Prostate gland (tissue), 2 donors: ENCODE measurements at regions of chr10 and their contacts with region 1.

Region 1: GRCh38 chr10:21495752-21496342 is 29.6 kb downstream of the SKIDA1 start:
- DNase-seq: peak; percentile 73
- H3K4me3 ChIP-seq: peak overlapping the region; percentile 64 to 65
- H3K27ac ChIP-seq: peak overlapping the region; percentile 48 to 52
- H3K4me1 ChIP-seq: no peaks in the 10 kb centered on the region
- H3K27me3 ChIP-seq: no peaks in the 10 kb centered on the region
- CTCF ChIP-seq: peak; percentile 96 to 98 (median 98)
- POLR2A ChIP-seq: no peak

Region 2: GRCh38 chr10:21278491-21279239 is 217.2 kb before region 1 on chr10:
- intact Hi-C with region 1: loop called (anchors 5 kb)
- DNase-seq: peak; percentile 92
- H3K4me3 ChIP-seq: no peak overlapping the region
- H3K27ac ChIP-seq: no peak overlapping the region
- H3K4me1 ChIP-seq: no peaks in the 10 kb centered on the region
- H3K27me3 ChIP-seq: no peaks in the 10 kb centered on the region
- CTCF ChIP-seq: peak; percentile 57 to 88 (median 80)
- POLR2A ChIP-seq: no peak

Region 3: DNA sequence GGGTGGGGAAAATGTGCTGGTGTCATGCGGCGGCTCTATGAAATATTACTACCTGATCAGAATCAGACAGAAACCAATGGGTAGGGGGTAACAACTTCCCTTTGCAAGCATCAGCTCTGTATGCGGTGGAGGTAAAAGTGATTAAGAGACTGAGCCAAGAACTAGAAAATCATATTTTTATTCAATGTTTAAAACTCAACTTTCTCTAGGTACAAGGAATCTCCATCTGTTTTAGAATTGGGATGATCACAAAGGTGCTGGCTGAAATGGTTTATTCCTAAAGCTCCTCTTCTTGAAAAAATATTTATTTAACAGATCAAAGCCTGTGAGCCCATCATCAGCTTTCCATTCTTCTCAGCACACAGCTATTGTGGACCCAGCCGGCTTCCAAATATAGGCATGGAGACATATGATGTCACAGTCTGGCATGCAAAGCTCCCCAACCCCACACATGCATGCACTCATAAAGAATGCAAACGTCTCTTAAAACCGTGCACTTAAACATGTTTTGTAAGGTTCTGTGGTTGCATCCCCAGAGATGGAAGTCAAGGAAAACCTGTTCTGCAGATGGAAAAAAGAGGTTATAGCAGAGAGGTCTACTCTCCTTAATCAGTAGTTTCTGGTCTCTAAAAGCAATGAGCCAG is 96.3 kb before region 1 on chr10:
- intact Hi-C with region 1: no loop called
- DNase-seq: peak; percentile 14
- H3K4me3 ChIP-seq: no peak overlapping the region
- H3K27ac ChIP-seq: no peak overlapping the region
- H3K4me1 ChIP-seq: no peaks in the 10 kb centered on the region
- H3K27me3 ChIP-seq: no peaks in the 10 kb centered on the region
- CTCF ChIP-seq: no peak
- POLR2A ChIP-seq: no peak

Region 4: DNA sequence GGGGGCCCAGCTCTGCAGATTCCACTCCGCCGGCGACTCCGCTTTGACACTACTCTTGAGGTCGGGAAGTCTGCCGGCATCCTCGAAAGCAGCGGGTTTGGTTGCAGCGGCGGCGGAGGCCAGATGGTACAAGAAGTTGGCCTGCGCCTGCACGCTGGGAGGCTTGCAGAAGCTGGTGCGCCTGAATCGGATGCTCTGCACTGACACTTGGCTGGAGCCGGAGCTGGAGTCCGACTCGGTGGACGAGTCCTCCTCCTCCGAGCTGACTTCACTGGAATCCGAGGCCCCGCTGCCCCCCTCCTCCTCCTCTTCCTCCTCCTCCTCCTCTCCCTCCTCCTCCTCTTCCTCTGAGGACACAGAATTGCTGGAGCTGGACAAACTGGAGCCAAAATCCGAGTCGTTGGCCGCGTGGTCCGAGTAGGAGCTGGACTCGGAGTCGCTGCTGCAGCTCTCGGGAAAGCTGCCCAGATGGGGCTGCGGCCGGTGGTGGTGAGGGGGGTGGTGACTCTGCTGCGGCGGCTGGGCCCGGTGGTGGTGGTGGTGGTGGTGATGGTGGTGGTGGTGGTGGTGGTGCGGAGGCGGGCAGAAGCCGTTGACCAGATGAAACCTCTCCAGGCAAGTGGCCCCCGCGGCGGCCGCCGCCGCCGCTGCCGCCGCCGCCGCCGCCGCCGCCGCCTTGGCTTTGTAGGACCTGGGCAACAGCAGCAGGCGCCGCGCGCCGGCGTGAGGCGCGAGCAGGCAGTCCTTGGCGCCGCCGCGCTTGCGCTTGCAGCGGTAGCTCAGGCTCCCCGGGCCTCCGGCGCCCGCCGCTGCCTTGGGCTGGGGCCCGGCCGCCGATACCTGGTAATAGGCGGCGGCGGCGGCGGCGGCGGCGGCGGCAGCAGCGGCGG is 20.6 kb after region 1 on chr10:
- intact Hi-C with region 1: no loop called
- DNase-seq: peak; percentile 57
- H3K4me3 ChIP-seq: peak overlapping the region; percentile 45 to 52
- H3K27ac ChIP-seq: peak overlapping the region; percentile 80 to 81
- H3K4me1 ChIP-seq: no peaks in the 10 kb centered on the region
- H3K27me3 ChIP-seq: no peaks in the 10 kb centered on the region
- CTCF ChIP-seq: no peak
- POLR2A ChIP-seq: no peak

Region 5: GRCh38 chr10:21732067-21732772 is 236.4 kb after region 1 on chr10:
- intact Hi-C with region 1: loop called (anchors 2 kb)
- DNase-seq: no peak
- H3K4me3 ChIP-seq: no peak overlapping the region
- H3K27ac ChIP-seq: no peak overlapping the region
- H3K4me1 ChIP-seq: no peaks in the 10 kb centered on the region
- H3K27me3 ChIP-seq: no peaks in the 10 kb centered on the region
- CTCF ChIP-seq: peak; percentile 14 to 73 (median 64)
- POLR2A ChIP-seq: no peak

Region 6: GRCh38 chr10:21953585-21954057 is 457.8 kb after region 1 on chr10:
- intact Hi-C with region 1: loop called (anchors 5 kb)
- DNase-seq: no peak
- H3K4me3 ChIP-seq: no peak overlapping the region
- H3K27ac ChIP-seq: no peak overlapping the region
- H3K4me1 ChIP-seq: no peaks in the 10 kb centered on the region
- H3K27me3 ChIP-seq: no peaks in the 10 kb centered on the region
- CTCF ChIP-seq: peak in 2 of 4 experiments; percentile 20 to 40
- POLR2A ChIP-seq: no peak

Region 7: GRCh38 chr10:22251751-22252223 is 755.9 kb after region 1 on chr10:
- intact Hi-C with region 1: loop called (anchors 10 kb)
- DNase-seq: peak; percentile 54
- H3K4me3 ChIP-seq: peak overlapping the region; percentile 60 to 62
- H3K27ac ChIP-seq: peak overlapping the region; percentile 91 to 92
- H3K4me1 ChIP-seq: no peaks in the 10 kb centered on the region
- H3K27me3 ChIP-seq: no peaks in the 10 kb centered on the region
- CTCF ChIP-seq: peak in 1 of 4 experiments; percentile 2
- POLR2A ChIP-seq: no peak

Region 8: GRCh38 chr10:22988581-22989360 is 1492.9 kb after region 1 on chr10:
- intact Hi-C with region 1: loop called (anchors 5 kb)
- DNase-seq: peak; percentile 68
- H3K4me3 ChIP-seq: no peak overlapping the region
- H3K27ac ChIP-seq: no peak overlapping the region
- H3K4me1 ChIP-seq: no peaks in the 10 kb centered on the region
- H3K27me3 ChIP-seq: no peaks in the 10 kb centered on the region
- CTCF ChIP-seq: peak; percentile 76 to 92 (median 90)
- POLR2A ChIP-seq: no peak